ENCODE measurements at regions of chr2 and their contacts with region 1.

Region 1: GRCh38 chr2:39069136-39069515 is 51.7 kb downstream of the SOS1 start:
- H3K4me3 Mint-ChIP-seq: no peak overlapping the region
- H3K27ac Mint-ChIP-seq: no peak overlapping the region
- H3K4me1 Mint-ChIP-seq: peaks cover 5% of the 10 kb centered on the region
- H3K27me3 Mint-ChIP-seq: no peaks in the 10 kb centered on the region

Region 2: DNA sequence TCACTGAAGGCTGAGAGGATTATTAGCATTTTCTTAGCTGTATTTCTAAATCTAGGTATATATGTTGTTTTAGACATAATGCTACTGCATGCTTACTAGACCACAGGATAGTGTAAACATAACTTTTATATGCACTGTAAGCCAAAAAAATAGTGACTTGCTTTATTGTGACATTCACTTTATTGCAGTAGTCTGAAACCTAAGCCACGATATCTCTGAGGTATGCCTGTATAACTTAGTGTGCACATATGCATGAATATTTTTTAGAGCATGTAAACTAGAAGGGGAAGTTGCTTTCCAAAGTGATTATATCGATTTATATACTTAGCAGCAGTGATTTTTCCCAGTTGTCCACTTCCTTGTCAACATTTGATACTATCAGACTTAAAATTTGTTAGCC is 30.1 kb before region 1 on chr2:
- intact Hi-C with region 1: no loop called
- H3K4me3 Mint-ChIP-seq: no peak overlapping the region
- H3K27ac Mint-ChIP-seq: no peak overlapping the region
- H3K4me1 Mint-ChIP-seq: no peaks in the 10 kb centered on the region
- H3K27me3 Mint-ChIP-seq: no peaks in the 10 kb centered on the region

Region 3: DNA sequence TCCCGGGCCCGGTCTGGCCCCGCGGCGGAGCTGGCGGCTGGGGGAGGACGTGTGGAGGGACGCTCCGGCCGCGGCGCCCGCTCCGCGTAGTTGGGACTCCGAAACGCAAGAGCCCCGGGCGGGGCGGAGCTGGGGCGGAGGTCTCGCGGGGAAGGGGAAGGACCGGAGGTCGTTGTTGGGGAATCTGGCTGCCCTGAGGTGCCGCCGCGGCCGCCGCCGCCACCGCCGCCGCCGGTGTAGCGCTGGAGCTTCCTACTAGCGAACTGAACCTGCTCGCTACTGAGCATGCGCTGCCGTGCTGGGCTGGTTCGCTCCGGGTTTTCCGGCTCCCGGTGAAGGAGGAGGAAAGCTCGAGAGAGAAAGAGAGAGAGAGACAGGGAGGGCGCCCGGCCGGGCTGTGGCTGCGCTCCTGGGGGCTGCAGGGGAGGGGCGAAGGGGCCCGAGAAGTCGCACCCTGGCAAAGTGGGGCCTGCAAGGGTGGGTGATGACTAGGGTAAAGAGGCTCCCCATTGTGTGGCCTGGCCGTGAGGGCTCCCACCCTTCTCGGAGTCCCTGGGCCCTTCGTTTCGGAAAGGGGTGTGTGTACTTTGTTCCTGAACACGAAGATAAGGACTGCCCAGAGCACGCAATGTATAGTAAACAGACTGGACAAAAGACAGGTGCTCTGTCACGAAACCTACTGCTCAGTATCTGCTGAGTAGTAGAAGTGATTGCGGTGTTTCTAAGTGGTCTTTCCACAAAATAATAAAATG is 51.8 kb after region 1 on chr2 and contains the start of gene SOS1:
- intact Hi-C with region 1: loop called (anchors 5 kb)
- H3K4me3 Mint-ChIP-seq: peak within 1 kb of the TSS; percentile 91
- H3K27ac Mint-ChIP-seq: peak within 1 kb of the TSS; percentile 97
- H3K4me1 Mint-ChIP-seq: peaks cover 72% of the 10 kb centered on the region
- H3K27me3 Mint-ChIP-seq: no peaks in the 10 kb centered on the region

Measured in dendritic cell treated with granulocyte-macrophage colony-stimulating factor and Interleukin-4, amounts not matched to agents 40 ng/mL and 50 ng/mL, for 4 days (primary cell).